Adrenal gland (tissue), 19 donors: ENCODE measurements at regions of chr17 and their contacts with region 1.

Region 1: DNA sequence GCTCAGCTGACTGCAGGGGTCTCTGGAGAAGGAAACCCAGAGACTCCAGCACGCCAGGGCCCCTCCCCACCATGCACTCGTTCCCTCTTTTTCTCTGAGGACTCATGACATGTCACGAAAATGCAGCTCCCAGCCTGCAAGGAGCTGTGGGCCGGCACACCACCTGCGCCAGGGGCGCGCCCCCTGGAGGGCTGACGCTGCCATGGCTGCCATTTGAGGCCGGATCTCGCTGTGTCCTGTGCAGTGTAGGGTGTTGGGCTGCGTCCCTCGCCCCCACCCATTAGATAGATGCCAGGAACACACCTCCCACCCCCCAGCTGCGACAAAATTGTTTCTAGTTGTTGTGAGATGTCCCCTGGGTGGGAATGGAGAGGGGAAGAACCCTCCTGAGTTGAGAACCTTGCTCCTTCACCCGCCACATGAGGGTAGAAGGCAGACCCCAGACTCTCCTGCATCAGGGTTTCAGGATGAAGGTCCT is 8.2 kb downstream of the SYNGR2 start:
- DNase-seq: peak; percentile 63 to 86 (median 76)
- H3K4me3 ChIP-seq: no peak overlapping the region
- H3K27ac ChIP-seq: no peak overlapping the region
- H3K4me1 ChIP-seq: peaks cover 19 to 61% of the 10 kb centered on the region in 2 donors
- H3K27me3 ChIP-seq: no peaks in the 10 kb centered on the region
- CTCF ChIP-seq: peak; percentile 75 to 91 (median 81)
- POLR2A ChIP-seq: no peak

Region 2: GRCh38 chr17:78128551-78129350 is 47.8 kb before region 1 on chr17 and contains the start of gene TMC6:
- intact Hi-C with region 1: loop called in 1 of 2 experiments (anchors 5 kb)
- DNase-seq: peak in 1 of 7 donors; percentile 28
- H3K4me3 ChIP-seq: peak within 1 kb of the TSS in 3 of 4 donors; percentile 18 to 74 (median 33)
- H3K27ac ChIP-seq: peak within 1 kb of the TSS in 4 of 5 donors; percentile 70 to 91 (median 72)
- H3K4me1 ChIP-seq: peaks cover 12 to 47% of the 10 kb centered on the region in 2 donors
- H3K27me3 ChIP-seq: peaks cover 11% of the 10 kb centered on the region
- CTCF ChIP-seq: no peak
- POLR2A ChIP-seq: no peak
- total RNA-seq, gene TMC6: 3.9 to 38.9 (median 18.8) TPM

Region 3: GRCh38 chr17:78263063-78263743 is 86.6 kb after region 1 on chr17:
- intact Hi-C with region 1: no loop called
- DNase-seq: peak in 5 of 7 donors; percentile 55 to 71 (median 59)
- H3K4me3 ChIP-seq: no peak overlapping the region
- H3K27ac ChIP-seq: peak overlapping the region in 2 of 5 donors; percentile 74 to 77
- H3K4me1 ChIP-seq: peaks cover 0 to 13% of the 10 kb centered on the region in 2 donors
- H3K27me3 ChIP-seq: no peaks in the 10 kb centered on the region
- CTCF ChIP-seq: peak in 1 of 6 experiments; percentile 1
- POLR2A ChIP-seq: no peak